HAP-1 (cell line): ENCODE measurements at regions of chr7 and their contacts with region 1.

Region 1: GRCh38 chr7:138738551-138739335 is 37.6 kb upstream of the SVOPL start:
- DNase-seq: peak; percentile 90 to 92
- H3K4me3 ChIP-seq: no peak overlapping the region
- H3K4me1 ChIP-seq: peaks cover 5% of the 10 kb centered on the region; the same call in 1 of the 2 replicates
- H3K27me3 ChIP-seq: no peaks in the 10 kb centered on the region

Region 2: GRCh38 chr7:137656227-137656849 is 1082.4 kb before region 1 on chr7:
- in situ Hi-C with region 1: loop called (anchors 25 kb)
- DNase-seq: peak; percentile 55 to 86
- H3K4me3 ChIP-seq: no peak overlapping the region
- H3K4me1 ChIP-seq: peaks cover 7% of the 10 kb centered on the region
- H3K27me3 ChIP-seq: peaks cover 7% of the 10 kb centered on the region; the same call in 1 of the 2 replicates

Region 3: DNA sequence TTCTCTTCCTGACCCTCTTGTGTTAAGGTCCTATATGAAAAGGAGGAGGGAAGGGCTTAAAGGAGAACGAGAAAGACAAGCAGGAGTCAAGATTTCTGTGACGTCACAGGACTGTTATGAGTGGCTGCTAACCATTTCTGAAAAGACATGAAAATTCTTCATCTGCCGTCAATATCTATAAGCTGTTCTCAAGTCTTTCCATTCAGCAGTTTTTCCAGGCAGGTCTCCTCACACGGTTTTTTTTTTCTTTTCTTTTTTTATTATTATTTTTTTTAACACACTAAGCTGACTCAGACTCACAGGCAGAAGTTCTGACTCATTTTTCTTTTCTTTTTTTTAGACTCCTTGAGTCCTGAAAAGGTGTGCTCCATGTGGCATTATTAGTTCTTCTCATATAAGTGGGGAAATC is 963.9 kb before region 1 on chr7:
- in situ Hi-C with region 1: no loop called
- DNase-seq: no peak
- H3K4me3 ChIP-seq: no peak overlapping the region
- H3K4me1 ChIP-seq: no peaks in the 10 kb centered on the region
- H3K27me3 ChIP-seq: peaks cover 22% of the 10 kb centered on the region

Region 4: GRCh38 chr7:137898839-137899721 is 839.7 kb before region 1 on chr7:
- in situ Hi-C with region 1: loop called (anchors 10 kb)
- DNase-seq: peak; percentile 57 to 89
- H3K4me3 ChIP-seq: no peak overlapping the region
- H3K4me1 ChIP-seq: no peaks in the 10 kb centered on the region
- H3K27me3 ChIP-seq: no peaks in the 10 kb centered on the region

Region 5: GRCh38 chr7:138002096-138002827 is 736.5 kb before region 1 on chr7:
- in situ Hi-C with region 1: loop called (anchors 10 kb)
- DNase-seq: peak; percentile 99 to 100
- H3K4me3 ChIP-seq: peak overlapping the region; percentile 82
- H3K4me1 ChIP-seq: peaks cover 23% of the 10 kb centered on the region
- H3K27me3 ChIP-seq: no peaks in the 10 kb centered on the region

Region 6: GRCh38 chr7:138151731-138152577 is 586.8 kb before region 1 on chr7:
- in situ Hi-C with region 1: loop called (anchors 10 kb)
- DNase-seq: no peak
- H3K4me3 ChIP-seq: no peak overlapping the region
- H3K4me1 ChIP-seq: peaks cover 3% of the 10 kb centered on the region; the same call in 1 of the 2 replicates
- H3K27me3 ChIP-seq: no peaks in the 10 kb centered on the region

Region 7: DNA sequence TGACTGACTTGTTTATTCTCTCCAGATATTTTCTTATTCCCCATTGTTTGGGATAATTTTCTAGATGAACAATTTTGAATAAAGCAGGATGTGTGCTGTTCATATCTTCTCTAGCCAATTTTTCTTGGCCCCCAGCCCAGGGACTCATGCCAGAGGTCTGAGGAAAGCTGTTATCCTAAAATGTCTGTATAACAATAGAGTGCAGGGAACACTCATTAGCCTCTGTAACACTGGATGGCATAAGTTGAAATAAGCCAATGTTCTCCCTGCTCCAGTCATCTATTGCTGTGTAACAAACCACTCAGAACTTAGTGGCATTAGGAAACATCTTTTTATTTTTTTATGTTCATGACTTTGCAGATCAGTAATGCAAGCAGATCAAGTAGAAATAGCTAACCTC is 400.4 kb before region 1 on chr7:
- in situ Hi-C with region 1: no loop called
- DNase-seq: peak; percentile 69 to 78
- H3K4me3 ChIP-seq: no peak overlapping the region
- H3K4me1 ChIP-seq: peaks cover 23% of the 10 kb centered on the region
- H3K27me3 ChIP-seq: no peaks in the 10 kb centered on the region